ENCODE measurements at regions of chr14 and their contacts with region 1.

Region 1: GRCh38 chr14:34875031-34875922 is at the start of gene BAZ1A:
- H3K4me3 ChIP-seq: peak within 1 kb of the TSS; percentile 97
- H3K27ac ChIP-seq: peak within 1 kb of the TSS; percentile 96
- H3K4me1 ChIP-seq: peaks cover 6% of the 10 kb centered on the region; the same call in 1 of the 2 replicates
- CTCF ChIP-seq: peak; percentile 61

Region 2: DNA sequence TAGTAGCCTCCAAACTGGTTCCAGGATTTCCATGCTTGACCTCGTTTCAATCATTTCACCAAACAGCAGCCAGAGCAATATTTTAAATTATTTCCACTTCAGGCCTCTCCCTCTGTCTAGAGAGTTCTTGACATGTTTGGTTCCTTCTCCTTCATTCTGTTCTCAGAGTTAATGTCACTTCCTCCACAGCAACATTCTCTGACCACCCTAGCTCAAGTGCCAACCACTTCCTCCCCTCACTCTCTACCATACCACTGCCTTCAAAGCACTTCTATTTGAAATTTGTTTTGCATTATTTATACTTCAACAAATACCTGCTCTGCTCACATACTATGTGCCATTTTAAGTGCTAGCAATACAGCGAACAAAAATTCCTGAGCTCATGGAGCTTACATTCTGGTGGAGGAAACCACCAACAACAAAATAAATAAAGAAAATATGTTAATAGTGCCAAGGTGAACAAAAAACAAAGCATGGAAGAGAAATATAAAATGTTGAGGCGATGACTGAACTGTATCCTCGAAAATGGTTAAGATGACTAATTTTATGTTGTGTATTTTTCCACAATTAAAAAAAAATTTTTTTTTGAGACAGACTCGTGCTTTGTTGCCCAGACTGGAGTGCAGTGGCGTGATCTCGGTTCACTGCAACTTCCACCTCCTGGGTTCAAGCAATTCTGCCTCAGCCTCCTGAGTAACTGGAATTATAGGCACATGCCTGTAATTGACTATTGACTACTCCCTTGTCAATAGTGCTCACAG is 17.4 kb before region 1 on chr14:
- CTCF ChIA-PET with region 1: no interaction called
- POLR2A ChIA-PET with region 1: interaction called, 13 read pairs
- H3K4me3 ChIP-seq: no peak overlapping the region
- H3K27ac ChIP-seq: no peak overlapping the region
- H3K4me1 ChIP-seq: no peaks in the 10 kb centered on the region
- CTCF ChIP-seq: no peak

Region 3: DNA sequence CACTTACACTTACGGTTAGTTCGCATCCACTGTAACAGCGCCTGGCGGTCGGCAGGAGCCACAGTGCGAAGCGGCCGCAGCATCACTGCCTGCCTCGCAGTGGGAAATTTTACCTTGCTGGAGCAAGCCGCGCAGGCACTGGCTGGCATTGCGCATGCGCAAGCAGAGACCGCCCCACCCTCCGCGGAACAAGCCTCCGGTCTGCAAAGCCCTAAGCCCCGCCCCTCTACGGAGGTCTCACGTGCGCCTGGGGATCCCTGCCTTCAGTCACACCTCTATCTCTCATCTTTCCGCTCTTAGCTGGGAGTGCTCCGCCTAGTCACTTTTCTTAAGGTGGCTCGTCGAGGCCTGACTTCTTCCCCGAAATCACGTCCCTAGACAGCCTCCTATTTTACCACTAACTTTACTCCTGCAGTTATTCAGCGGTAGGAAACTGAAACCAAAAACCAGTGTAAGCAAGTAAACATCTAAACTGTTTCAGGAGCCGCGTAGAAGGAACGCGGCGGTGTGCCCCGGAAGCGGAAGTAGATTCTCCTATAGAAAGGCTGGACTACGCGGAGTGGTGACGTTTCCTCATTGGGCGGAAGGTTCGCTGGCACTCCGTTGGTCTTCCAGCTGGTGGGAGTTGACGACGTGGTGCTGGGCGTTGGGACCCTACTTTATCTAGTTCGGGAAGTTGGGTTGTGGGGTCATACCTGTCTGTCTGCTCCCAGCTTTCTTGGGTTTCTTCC is 107.3 kb after region 1 on chr14 and contains the start of gene SRP54:
- CTCF ChIA-PET with region 1: no interaction called
- POLR2A ChIA-PET with region 1: interaction called, 35 read pairs
- H3K4me3 ChIP-seq: peak within 1 kb of the TSS; percentile 82
- H3K27ac ChIP-seq: peak within 1 kb of the TSS; percentile 75
- H3K4me1 ChIP-seq: peaks cover 3% of the 10 kb centered on the region
- CTCF ChIP-seq: no peak; the same call in 1 of the 2 replicates